Right ventricle myocardium inferior (tissue), 1 donor: ENCODE measurements at regions of chr1 and their contacts with region 1.

Region 1: GRCh38 chr1:200802865-200803512 is 64.3 kb downstream of the CAMSAP2 start:
- DNase-seq: peak; percentile 72
- ATAC-seq: peak; percentile 76

Region 2: DNA sequence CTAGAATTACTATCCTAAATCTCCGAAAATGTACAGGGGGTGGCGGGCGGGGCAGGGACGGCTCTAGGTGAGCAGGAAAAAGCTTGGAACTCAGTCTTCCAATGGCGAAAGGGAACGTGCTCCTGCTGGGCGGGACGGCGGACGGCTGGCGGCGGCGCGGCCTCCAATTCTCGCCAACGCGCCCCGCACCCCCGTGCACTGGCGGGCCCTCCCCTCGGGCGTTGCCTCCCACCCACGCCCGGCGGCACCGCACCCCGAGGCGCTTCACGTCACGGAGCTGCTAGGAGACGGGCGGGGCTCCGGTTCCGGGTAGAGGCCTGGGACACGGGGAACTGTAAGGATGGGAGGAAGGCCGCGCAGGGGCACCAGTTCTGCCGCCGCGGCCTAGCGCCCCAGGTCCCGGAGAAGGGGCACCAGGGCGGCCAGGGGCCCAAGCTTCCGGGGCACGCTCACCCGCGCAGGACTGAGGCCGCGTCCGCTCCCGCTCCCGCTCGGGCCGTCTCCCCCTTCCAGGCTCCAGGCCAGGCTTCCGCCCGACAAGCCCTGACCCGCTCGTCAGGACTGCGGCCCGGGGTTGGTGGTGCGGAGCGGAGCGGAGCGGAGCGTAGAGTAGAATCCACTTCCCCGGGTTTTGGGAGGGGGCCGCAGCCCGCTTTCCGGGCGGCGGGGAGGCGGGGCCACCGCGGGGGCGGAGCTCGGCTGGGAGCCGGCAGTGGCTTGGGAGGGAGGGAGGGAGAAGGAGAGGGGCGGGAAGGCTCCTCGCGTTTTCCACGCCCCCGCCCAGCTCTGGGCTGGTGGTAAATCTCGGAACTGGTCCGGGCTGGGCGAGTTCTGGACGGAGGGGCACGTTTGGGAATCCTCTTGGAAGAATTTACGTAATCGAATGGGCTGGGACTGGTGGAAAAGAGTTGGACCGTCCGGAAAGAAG is 133.4 kb before region 1 on chr1 and contains the start of gene DDX59:
- intact Hi-C with region 1: loop called (anchors 2 kb)
- DNase-seq: peak; percentile 98
- ATAC-seq: peak; percentile 95
- total RNA-seq, gene DDX59: 12.7 TPM

Region 3: DNA sequence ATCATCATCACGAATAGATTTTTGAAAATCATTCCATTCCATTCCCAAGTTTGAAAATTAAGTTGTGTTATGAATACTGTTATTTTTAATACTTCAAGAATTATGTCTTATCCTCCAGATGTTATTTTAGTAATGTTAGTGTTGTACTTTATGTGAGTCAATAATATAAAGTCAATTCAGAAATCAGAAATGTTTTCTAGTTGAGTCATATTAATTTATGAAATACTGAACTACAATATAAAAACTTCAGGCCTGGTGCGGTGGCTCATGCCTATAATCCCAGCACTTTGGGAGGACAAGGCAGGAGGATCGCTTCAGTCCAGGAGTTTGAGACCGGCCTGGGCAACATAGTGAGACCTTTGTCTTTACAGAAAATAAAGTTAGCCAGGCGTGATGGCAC is 31.4 kb after region 1 on chr1:
- intact Hi-C with region 1: no loop called
- DNase-seq: no peak
- ATAC-seq: no peak